Dorsolateral prefrontal cortex (tissue), 120 donors: ENCODE measurements at regions of chr12 and their contacts with region 1.

Region 1: GRCh38 chr12:76332606-76333005 is 15.6 kb downstream of the BBS10 start:
- DNase-seq: no peak
- H3K4me3 ChIP-seq: no peak overlapping the region
- H3K27ac ChIP-seq: no peak overlapping the region
- H3K27me3 ChIP-seq: no peaks in the 10 kb centered on the region
- CTCF ChIP-seq: no peak

Region 2: GRCh38 chr12:76144245-76144549 is 188.4 kb before region 1 on chr12:
- intact Hi-C with region 1: no loop called
- DNase-seq: no peak
- H3K4me3 ChIP-seq: no peak overlapping the region
- H3K27ac ChIP-seq: no peak overlapping the region
- H3K27me3 ChIP-seq: no peaks in the 10 kb centered on the region
- CTCF ChIP-seq: no peak

Region 3: DNA sequence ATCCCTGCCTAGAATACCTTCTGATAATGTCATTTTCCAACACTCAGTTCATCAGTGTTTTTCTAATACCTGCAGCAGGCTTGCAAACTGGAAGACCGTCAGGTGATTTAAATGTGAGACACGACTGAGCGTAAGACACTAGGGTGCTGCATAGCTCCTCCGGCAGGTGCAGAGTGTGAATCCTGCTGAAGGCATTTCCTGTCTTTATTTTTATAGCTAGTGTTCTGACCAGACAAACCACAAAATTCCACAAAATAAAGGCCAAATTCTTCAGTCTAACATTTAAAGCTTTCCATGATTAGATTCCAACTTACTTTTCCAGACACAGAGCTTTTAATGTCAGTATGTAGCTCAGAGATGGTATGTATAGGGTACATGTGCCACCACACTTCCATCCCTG is 55.1 kb before region 1 on chr12:
- intact Hi-C with region 1: loop called in 1 of 2 experiments (anchors 5 kb)
- DNase-seq: no peak
- H3K4me3 ChIP-seq: no peak overlapping the region
- H3K27ac ChIP-seq: no peak overlapping the region
- H3K27me3 ChIP-seq: no peaks in the 10 kb centered on the region
- CTCF ChIP-seq: no peak